ENCODE measurements at regions of chr5 and their contacts with region 1.

Region 1: DNA sequence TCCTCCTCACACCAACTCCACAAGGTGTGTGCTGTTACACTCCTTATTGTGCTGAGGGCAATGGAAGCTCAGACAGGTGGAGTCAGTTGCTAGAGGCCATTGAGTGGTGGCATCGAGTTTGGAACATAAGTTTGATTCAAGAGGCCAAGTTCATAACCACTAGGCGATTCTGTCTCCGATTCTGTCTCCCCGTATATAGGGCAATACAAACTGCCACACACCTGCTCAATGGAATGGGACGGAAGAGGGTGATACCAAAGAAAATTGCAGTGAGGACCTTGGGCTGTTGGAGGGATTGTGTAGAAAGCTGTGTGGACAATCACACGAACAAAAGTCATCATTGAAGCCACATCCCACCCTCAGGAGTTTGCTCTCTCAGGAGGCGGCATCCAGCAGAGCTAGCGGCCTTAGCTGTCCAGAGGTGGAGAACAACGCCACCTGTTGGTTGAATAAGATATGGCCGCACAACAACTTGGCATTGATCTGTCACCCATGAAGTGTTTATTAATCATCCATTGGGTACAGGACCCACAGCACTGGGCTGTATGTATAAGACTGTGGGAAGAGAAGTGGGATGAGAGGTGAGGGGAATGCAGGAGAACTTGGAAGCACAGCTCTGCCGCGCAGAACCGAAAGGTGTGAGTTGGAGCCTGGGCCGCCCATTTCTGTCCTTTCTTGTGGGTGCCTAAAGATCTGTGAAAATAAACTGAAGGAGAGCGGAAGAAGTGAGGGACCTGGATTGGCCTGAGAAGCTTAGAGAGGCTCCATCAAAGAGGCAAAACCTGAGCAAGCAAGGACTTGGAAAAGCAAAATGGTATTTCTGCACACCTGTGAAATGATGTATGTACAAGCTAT is 16.1 kb upstream of the NEUROG1 start:
- DNase-seq: peak in 4 of 5 donors; percentile 81 to 86 (median 83)
- H3K4me3 ChIP-seq: no peak overlapping the region
- H3K27ac ChIP-seq: no peak overlapping the region
- H3K4me1 ChIP-seq: no peaks in the 10 kb centered on the region
- H3K27me3 ChIP-seq: peaks cover 30% of the 10 kb centered on the region
- CTCF ChIP-seq: peak; percentile 85

Region 2: DNA sequence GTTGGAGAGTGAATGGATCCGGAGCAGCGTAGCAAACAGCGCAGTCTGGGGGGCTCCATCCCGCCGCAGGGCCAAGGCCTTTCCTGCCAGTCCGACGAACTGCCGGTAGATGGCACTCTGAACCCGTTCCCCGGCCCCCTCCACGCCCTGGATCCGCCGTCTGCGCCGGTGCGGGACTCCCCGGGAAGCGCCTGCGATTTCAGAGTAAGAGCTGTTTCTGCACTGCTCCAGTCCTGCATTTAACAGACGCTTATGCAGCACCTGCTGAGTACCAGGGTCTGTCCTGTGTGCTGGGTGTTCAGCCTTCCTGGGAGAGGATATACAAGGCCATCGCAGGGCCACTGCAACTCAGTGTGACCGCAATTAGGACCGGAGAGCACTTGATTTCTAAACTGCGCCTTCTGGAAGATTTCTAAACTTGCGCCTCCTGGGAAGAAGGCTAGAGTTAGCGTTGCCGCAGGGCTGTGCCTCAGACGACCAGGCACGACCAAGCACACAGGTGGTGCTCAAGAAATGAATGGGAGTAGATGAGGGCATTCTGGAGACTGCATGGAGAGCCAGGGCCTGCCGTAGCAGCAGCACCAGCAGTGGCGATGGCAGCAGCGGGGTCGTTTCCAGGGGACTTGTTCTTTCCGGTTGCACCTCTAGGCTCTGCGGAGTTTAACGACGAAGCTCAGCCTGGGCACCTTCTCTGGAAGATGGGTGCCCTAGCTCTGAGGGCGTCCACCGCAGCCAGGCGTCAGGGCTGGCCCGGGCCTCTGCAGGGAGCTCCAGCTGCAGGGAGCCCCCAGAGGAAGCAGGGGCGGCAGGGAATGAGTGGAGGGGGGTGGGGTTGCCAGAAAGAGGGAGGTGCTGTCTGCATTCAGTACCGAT is 85.4 kb before region 1 on chr5:
- intact Hi-C with region 1: loop called (anchors 10 kb)
- DNase-seq: peak; percentile 84 to 89 (median 86)
- H3K4me3 ChIP-seq: peak overlapping the region in 2 of 3 donors; percentile 51 to 71
- H3K27ac ChIP-seq: no peak overlapping the region
- H3K4me1 ChIP-seq: peaks cover 0 to 5% (median 0%) of the 10 kb centered on the region in 3 donors
- H3K27me3 ChIP-seq: peaks cover 20% of the 10 kb centered on the region
- CTCF ChIP-seq: peak; percentile 90

Region 3: DNA sequence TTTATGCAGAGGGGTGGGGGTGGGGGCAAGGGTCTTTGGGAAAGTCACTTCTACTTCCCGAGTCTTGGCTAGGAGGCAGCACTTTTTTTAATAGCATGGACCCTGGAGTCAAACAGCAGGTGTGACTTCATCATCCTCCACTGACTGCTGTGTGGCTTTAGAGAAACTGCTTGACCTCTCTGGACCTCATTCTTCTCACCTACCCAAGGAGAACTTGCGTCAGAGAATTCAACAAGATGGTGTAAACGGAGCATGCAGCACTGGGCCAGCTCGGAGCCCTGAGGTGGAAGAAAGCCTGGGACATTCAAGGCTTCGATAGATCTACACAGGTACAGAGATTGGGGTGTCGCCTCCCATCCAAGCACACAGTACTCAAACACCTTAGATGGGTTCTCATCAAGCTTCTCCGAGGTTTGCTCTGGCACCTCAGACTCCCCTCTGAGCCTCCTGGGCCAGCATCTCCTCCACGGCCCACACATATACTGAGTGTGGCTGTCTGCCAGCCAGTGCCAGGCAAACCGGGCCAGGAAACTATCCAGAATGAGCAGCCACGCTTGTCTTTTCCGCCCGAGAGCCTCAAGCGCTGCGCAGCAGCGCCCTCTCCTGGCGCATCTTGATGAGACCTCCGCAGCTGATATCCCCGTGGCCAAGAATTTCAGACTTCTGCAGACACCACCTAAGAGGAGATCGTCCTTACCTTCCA is 278.0 kb after region 1 on chr5:
- intact Hi-C with region 1: loop called (anchors 10 kb)
- DNase-seq: peak; percentile 77 to 85 (median 80)
- H3K4me3 ChIP-seq: no peak overlapping the region
- H3K27ac ChIP-seq: no peak overlapping the region
- H3K4me1 ChIP-seq: peaks cover 0 to 6% (median 4%) of the 10 kb centered on the region in 3 donors
- H3K27me3 ChIP-seq: no peaks in the 10 kb centered on the region
- CTCF ChIP-seq: peak; percentile 79